ENCODE measurements at regions of chr13 and their contacts with region 1.

Region 1: DNA sequence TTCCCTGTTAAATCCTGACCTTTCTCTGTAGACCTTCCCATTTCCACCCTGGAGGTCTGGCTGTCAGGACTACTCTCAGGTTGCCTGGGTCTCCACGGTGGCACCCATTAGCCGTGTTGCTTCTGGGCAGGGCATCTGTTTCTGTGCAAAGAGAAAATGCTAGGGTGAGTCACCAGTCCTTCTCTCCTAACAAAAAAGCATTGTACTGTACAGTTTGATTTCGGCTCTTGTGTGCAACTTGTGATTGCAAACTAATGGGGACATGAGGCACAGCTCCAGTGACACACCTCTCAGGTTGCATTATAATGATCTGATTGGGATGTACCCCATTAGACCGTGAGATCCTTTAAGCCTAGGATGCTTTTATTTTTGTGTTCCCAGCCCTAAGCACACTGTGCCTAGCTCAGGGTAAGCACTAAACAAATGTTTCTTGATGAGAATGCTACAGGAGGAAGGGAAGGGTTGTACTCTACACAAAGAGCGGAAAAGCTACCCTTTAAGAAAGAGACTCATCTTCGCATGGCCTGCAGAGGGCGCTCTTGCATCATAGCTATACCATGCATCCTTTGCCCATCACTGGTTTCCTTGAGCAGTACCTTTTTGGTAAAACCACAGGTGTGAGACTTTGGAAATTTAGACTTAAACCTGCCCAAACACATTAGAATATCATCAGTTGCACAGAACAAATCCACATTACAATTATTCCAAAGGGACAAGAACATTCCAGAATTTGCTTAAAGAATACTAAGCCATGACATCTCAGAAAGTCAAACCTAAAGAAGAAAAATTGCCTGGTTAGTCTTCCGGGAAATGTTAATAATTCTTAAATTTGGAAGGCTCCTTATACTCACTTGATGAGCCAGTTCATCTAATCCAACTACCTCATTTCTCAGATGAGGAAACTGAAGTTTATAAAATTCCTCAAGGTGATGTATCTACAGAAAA is 20.3 kb upstream of the TRIM13 start:
- DNase-seq: peak; percentile 94
- H3K4me3 ChIP-seq: no peak overlapping the region
- H3K27ac ChIP-seq: no peak overlapping the region
- H3K4me1 ChIP-seq: no peaks in the 10 kb centered on the region
- H3K27me3 ChIP-seq: no peaks in the 10 kb centered on the region
- CTCF ChIP-seq: peak; percentile 77 to 88 (median 80)
- EP300 ChIP-seq: no peak
- POLR2A ChIP-seq: no peak

Region 2: DNA sequence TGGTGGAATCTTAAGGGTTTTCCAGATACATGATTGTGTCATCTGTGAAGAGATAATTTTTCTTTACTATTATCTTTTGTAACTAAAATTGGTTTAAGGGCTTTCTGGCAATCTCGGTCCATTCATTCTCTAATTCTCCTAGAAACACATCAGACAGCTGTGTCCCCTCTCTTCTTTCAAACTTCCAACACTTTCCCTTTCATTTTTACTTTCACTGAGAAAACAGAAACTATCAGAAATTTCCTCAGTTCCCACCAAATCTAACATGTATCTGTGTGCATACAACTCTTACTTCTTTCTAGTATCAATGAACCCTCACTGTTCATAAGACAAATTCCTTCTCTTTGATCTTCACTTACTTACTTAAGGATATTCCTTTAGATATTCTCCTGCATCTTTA is 78.9 kb after region 1 on chr13:
- intact Hi-C with region 1: no loop called
- DNase-seq: no peak
- H3K4me3 ChIP-seq: no peak overlapping the region
- H3K27ac ChIP-seq: no peak overlapping the region
- H3K4me1 ChIP-seq: no peaks in the 10 kb centered on the region
- H3K27me3 ChIP-seq: no peaks in the 10 kb centered on the region
- CTCF ChIP-seq: no peak
- EP300 ChIP-seq: no peak
- POLR2A ChIP-seq: no peak

Region 3: GRCh38 chr13:50529154-50529882 is 552.7 kb after region 1 on chr13:
- intact Hi-C with region 1: loop called (anchors 5 kb)
- DNase-seq: no peak
- H3K4me3 ChIP-seq: peak overlapping the region; percentile 2 to 31 (median 22)
- H3K27ac ChIP-seq: peak overlapping the region; percentile 40 to 71 (median 66)
- H3K4me1 ChIP-seq: peaks cover 34 to 51% (median 41%) of the 10 kb centered on the region in 4 donors
- H3K27me3 ChIP-seq: no peaks in the 10 kb centered on the region
- CTCF ChIP-seq: no peak
- EP300 ChIP-seq: no peak
- POLR2A ChIP-seq: no peak

Region 4: DNA sequence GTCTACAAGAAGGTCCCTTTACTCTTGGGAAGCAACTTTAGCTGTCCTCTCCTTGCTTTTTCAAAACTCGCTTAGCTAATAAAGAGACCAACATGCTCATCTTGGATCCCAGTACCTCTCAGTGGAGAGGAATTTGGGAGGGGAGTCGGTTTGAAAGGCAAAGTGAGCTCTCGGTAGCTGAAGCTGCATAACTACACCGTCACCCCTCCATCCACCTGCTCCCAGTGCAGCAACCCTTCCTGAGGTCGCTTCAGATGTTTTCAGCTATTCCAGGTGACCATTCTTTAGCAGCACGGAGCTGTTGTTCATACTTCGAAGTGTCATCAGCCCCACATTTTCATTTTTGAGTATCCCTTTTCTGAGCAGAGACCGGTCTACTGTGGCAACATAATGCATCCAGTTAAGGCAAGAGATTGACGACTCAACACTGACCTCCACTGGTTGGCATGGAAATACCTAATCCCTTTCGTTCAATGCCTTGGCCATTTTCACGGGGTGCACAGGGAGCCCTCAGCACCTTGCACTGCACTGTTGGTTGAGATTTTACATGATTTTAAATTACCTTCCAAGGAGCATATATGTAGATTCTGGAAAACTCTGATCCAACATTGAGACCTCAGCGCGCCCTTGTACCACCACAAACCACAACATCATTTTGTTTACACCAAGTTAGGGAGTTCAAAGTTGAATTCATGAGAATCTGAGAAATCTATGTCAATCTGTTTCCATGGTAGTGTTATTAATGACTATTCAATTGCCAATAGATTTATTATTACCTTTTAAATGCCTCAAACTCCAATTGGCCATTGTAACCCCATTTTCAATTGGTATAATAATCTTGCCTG is 824.7 kb after region 1 on chr13:
- intact Hi-C with region 1: loop called (anchors 2 kb)
- DNase-seq: no peak
- H3K4me3 ChIP-seq: peak overlapping the region in 1 of 4 donors; percentile 22
- H3K27ac ChIP-seq: no peak overlapping the region
- H3K4me1 ChIP-seq: peaks cover 12 to 18% (median 15%) of the 10 kb centered on the region in 4 donors
- H3K27me3 ChIP-seq: no peaks in the 10 kb centered on the region
- CTCF ChIP-seq: peak; percentile 55 to 73 (median 61)
- EP300 ChIP-seq: no peak
- POLR2A ChIP-seq: no peak

Region 5: DNA sequence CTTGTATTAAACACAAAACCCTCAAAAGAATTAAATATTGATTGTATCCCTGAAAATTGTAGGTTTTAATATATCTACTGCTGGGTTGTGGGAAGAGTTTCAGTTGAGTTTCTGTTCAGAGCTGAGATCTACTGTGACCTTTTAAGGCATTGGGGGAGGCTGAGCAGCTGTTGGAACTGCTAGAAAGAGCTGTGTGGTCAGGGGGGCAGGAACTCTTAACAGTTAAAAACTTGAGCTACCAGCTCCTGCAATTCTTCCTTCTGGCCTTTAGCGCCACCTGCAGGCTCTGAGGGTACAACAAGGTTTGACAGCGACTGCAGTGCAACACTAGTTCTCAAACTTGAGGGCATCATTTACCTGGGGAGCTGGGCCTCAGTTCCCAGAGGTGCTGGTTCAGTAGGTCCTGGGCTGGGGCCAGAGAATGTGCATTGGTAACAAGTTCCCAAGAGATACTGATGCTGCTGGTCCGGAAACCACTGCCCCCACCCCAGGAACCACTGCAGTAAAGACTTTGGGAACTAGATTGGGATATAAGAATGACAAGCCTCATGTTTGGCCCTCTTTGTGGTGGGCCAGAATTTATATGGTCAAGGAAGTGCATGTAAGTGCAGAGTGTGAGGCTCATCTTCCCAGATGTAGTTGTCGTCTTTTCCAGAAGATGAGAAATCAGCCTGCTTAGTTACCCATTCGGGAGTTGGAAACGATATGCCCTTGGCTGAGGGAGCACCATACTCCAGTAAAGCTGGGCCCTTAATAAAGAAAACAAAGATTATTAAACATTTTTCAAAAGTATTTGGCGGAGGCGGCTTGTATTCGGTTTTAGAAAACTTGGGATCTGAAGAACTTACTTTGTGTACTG is 935.6 kb after region 1 on chr13:
- intact Hi-C with region 1: loop called (anchors 5 kb)
- DNase-seq: no peak
- H3K4me3 ChIP-seq: no peak overlapping the region
- H3K27ac ChIP-seq: peak overlapping the region; percentile 7 to 91 (median 66)
- H3K4me1 ChIP-seq: peaks cover 54 to 70% (median 62%) of the 10 kb centered on the region in 4 donors
- H3K27me3 ChIP-seq: no peaks in the 10 kb centered on the region
- CTCF ChIP-seq: peak; percentile 80 to 89 (median 89)
- EP300 ChIP-seq: no peak
- POLR2A ChIP-seq: no peak

Region 6: DNA sequence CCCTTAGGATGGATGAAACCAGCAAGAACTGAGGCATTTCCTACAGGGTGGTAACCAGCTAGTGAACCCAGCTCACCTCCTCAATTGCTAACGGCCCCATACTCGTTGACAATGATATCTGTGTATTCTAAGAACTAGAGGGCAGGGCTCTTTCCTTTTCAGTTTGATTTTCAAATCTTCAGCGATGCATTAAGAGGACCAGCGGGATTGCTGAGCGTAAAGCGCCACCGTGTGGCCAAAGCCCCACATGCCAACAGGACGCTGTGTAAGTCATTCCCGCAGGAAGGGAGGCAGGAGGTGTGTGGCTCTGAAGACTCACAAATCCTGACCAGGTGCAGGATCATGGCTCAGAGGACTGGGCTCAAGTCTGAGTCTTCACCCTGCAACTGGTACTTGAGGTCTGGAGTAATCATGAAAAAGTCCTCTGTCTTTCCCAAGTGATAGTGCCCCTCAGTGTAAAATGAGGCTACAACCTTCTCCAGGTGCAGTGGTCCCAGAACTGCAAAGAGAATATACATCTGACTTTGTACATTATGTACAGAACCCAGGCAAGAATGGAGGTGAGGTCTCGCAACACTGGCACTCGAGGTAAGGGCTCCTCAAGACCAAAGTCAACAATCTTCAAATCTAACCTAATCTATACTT is 1093.5 kb after region 1 on chr13:
- intact Hi-C with region 1: loop called (anchors 5 kb)
- DNase-seq: no peak
- H3K4me3 ChIP-seq: no peak overlapping the region
- H3K27ac ChIP-seq: no peak overlapping the region
- H3K4me1 ChIP-seq: peaks cover 3 to 17% (median 9%) of the 10 kb centered on the region in 4 donors
- H3K27me3 ChIP-seq: peaks cover 0 to 7% (median 0%) of the 10 kb centered on the region in 4 donors
- CTCF ChIP-seq: peak; percentile 86 to 97 (median 89)
- EP300 ChIP-seq: no peak
- POLR2A ChIP-seq: no peak

Measured in esophagus muscularis mucosa (tissue), 4 donors.